Ovary (tissue), 10 donors: ENCODE measurements at regions of chr13 and their contacts with region 1.

Region 1: GRCh38 chr13:58666331-58666730 is 1034.8 kb downstream of the PCDH17 start:
- DNase-seq: no peak
- H3K4me3 ChIP-seq: no peak overlapping the region
- H3K27ac ChIP-seq: no peak overlapping the region
- H3K4me1 ChIP-seq: no peaks in the 10 kb centered on the region
- H3K27me3 ChIP-seq: no peaks in the 10 kb centered on the region
- CTCF ChIP-seq: no peak
- EP300 ChIP-seq: no peak
- POLR2A ChIP-seq: no peak

Region 2: GRCh38 chr13:58682616-58683015 is 16.3 kb after region 1 on chr13:
- intact Hi-C with region 1: loop called in 1 of 4 experiments (anchors 2 kb)
- DNase-seq: no peak
- H3K4me3 ChIP-seq: no peak overlapping the region
- H3K27ac ChIP-seq: no peak overlapping the region
- H3K4me1 ChIP-seq: no peaks in the 10 kb centered on the region
- H3K27me3 ChIP-seq: no peaks in the 10 kb centered on the region
- CTCF ChIP-seq: no peak
- EP300 ChIP-seq: no peak
- POLR2A ChIP-seq: no peak

Region 3: DNA sequence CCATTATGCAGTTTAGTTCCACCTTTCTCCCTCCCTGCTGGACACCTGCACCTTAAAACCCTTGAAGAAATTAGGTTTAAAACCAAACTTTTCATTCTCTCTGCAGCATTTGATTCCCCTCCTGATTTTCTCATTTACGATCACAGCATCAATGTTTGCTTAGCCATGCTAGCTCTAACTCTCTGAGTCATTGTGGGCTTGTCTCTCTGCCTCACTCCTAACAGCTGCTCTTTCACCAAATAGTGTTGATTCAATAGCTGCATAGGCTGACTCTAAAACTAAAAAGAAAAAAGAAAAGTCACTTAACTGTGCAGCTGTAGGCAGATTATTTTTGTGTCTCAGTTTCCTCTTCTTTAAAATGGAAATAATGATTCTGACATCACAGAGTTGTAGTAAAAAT is 372.5 kb after region 1 on chr13:
- intact Hi-C with region 1: no loop called
- DNase-seq: no peak
- H3K4me3 ChIP-seq: no peak overlapping the region
- H3K27ac ChIP-seq: no peak overlapping the region
- H3K4me1 ChIP-seq: no peaks in the 10 kb centered on the region
- H3K27me3 ChIP-seq: no peaks in the 10 kb centered on the region
- CTCF ChIP-seq: no peak
- EP300 ChIP-seq: no peak
- POLR2A ChIP-seq: no peak